Aorta (tissue), 5 donors: ENCODE measurements at regions of chr2 and their contacts with region 1.

Region 1: GRCh38 chr2:109613922-109614714 is at the starts of genes SEPTIN10 and SOWAHC:
- DNase-seq: peak; percentile 99
- ATAC-seq: peak; percentile 98
- H3K4me3 ChIP-seq: peak within 1 kb of the TSS; percentile 97 to 99
- H3K27ac ChIP-seq: peak within 1 kb of the TSS; percentile 92 to 99
- H3K4me1 ChIP-seq: peaks cover 4 to 6% of the 10 kb centered on the region in 2 donors
- H3K27me3 ChIP-seq: no peaks in the 10 kb centered on the region
- total RNA-seq, gene SEPTIN10: 127 to 132 TPM
- total RNA-seq, gene SOWAHC: 12.0 to 15.0 TPM

Region 2: GRCh38 chr2:109558076-109558882 is 55.8 kb before region 1 on chr2:
- intact Hi-C with region 1: loop called in 1 of 2 experiments (anchors 5 kb)
- DNase-seq: no peak
- ATAC-seq: no peak
- H3K4me3 ChIP-seq: no peak overlapping the region
- H3K27ac ChIP-seq: no peak overlapping the region
- H3K4me1 ChIP-seq: no peaks in the 10 kb centered on the region
- H3K27me3 ChIP-seq: no peaks in the 10 kb centered on the region

Region 3: DNA sequence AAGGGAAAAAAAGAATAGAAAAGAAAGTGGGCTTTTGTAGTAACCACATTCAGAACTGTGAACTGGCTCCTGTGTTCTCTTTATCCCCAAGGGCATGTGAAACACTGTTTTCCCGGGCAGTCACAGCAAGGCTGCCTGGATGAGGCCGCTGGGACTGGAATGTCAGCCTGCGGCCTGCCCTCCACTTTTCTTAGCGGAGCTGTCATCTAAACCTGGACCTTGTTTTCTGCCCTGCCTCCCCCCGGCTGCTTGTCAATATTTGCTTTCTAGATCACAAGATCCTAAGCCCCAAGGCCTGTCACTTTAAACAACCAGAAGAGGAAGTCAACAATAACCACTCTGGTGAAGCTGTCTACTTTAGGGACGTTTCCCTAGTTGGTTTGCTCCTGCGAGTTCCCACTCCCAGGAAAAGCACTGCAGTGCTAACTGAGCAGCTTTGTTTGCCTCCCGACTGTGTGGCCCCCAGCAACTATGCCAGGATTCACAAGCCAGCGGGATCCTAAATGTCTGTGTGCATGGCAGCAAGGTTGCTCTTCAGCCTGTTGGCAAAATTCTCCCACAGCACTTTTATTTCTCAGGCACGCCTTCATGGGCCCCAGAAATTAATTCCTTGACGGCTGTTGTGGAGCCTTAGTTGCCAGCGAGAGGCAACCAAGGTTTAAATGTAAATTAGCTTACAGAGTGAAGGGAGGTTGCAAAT is 30.6 kb after region 1 on chr2:
- intact Hi-C with region 1: loop called in 1 of 2 experiments (anchors 2 kb)
- DNase-seq: no peak
- ATAC-seq: peak; percentile 62
- H3K4me3 ChIP-seq: no peak overlapping the region
- H3K27ac ChIP-seq: peak overlapping the region; percentile 46 to 96
- H3K4me1 ChIP-seq: no peaks in the 10 kb centered on the region
- H3K27me3 ChIP-seq: no peaks in the 10 kb centered on the region

Region 4: GRCh38 chr2:109690822-109691547 is 76.9 kb after region 1 on chr2:
- intact Hi-C with region 1: loop called in 1 of 2 experiments (anchors 5 kb)
- DNase-seq: peak; percentile 83 to 87
- ATAC-seq: peak; percentile 89
- H3K4me3 ChIP-seq: no peak overlapping the region
- H3K27ac ChIP-seq: peak overlapping the region; percentile 44 to 94
- H3K4me1 ChIP-seq: peaks cover 5 to 6% of the 10 kb centered on the region in 2 donors
- H3K27me3 ChIP-seq: no peaks in the 10 kb centered on the region

Region 5: GRCh38 chr2:109715313-109715805 is 101.2 kb after region 1 on chr2:
- intact Hi-C with region 1: loop called in 1 of 2 experiments (anchors 5 kb)
- DNase-seq: no peak
- ATAC-seq: peak; percentile 68
- H3K4me3 ChIP-seq: no peak overlapping the region
- H3K27ac ChIP-seq: no peak overlapping the region
- H3K4me1 ChIP-seq: no peaks in the 10 kb centered on the region
- H3K27me3 ChIP-seq: no peaks in the 10 kb centered on the region